Endothelial cell of umbilical vein (primary cell): ENCODE measurements at regions of chr15 and their contacts with region 1.

Region 1: DNA sequence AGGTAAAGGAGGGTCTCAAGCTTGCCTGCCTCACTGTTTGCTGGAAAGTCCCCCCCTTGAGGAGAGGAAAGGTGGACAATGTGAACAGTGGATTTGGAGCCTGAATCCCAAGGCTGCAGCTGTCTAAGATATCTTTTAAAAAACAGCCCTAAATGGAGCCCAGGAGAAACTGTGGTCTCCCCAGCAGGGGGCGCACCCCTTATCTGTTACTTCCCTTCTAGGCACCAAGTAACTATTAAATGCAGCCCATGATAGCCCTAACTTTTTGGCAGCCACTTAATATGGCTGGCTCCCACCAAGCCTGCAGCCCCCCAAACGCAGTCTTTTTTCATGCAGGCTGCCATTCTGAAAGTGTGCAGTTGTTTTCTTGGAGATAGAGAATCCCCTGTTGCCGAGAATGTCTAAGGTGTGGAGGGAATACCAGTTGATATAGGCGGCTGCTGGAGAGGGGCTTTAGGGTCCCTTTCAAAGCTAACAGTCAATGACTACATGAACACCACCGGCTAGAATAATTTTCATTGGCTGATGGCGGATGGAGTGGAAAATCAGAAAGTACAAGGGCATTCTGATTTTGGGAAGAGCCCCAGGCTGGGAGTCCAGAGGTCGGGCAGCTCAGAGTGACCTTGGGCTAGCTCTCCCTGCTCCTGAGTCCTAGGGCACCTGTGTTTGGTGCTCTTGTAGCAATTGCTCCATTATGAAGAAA is 1.3 kb downstream of the RHCG start:
- DNase-seq: no peak
- H3K4me3 ChIP-seq: no peak overlapping the region
- H3K27ac ChIP-seq: no peak overlapping the region
- H3K4me1 ChIP-seq: no peaks in the 10 kb centered on the region
- H3K27me3 ChIP-seq: peaks cover 16 to 18% of the 10 kb centered on the region in 2 experiments
- CTCF ChIP-seq: peak; percentile 44 to 46
- POLR2A ChIP-seq: no peak

Region 2: GRCh38 chr15:89556413-89557262 is 61.6 kb after region 1 on chr15:
- CTCF ChIA-PET with region 1: interaction called, 7 read pairs
- POLR2A ChIA-PET with region 1: no interaction called
- dilution Hi-C with region 1: no loop called
- intact Hi-C with region 1: loop called (anchors 1 kb)
- DNase-seq: peak; percentile 82
- H3K4me3 ChIP-seq: no peak overlapping the region
- H3K27ac ChIP-seq: no peak overlapping the region
- H3K4me1 ChIP-seq: no peaks in the 10 kb centered on the region
- H3K27me3 ChIP-seq: peaks cover 4 to 14% of the 10 kb centered on the region in 2 experiments
- CTCF ChIP-seq: peak; percentile 61 to 71
- POLR2A ChIP-seq: no peak